Right cardiac atrium (tissue), 5 donors: ENCODE measurements at regions of chr4 and their contacts with region 1.

Region 1: GRCh38 chr4:124253080-124253479 is 459.5 kb downstream of the ANKRD50 start:
- DNase-seq: no peak
- ATAC-seq: no peak
- H3K4me3 ChIP-seq: no peak overlapping the region
- H3K27ac ChIP-seq: no peak overlapping the region
- H3K4me1 ChIP-seq: no peaks in the 10 kb centered on the region
- H3K27me3 ChIP-seq: no peaks in the 10 kb centered on the region

Region 2: DNA sequence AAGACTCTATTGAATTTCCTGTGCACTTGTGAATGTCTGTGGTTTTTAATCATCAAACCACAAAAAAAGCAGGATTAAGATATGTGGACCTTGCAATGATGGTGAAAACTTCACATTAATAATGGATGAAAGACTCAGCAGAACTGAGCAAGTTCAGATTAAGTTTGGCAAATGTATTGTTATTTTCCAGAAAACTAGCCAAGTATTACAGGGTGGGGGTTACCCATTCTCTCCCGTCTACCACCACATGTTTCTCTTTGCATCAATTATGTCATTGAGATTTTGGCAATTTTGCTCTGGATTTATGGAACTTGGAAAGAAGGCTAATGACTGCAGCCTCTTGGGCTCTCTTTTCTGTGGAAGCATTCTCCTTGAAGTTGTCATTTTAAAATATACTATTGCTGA is 117.7 kb before region 1 on chr4:
- intact Hi-C with region 1: loop called in 1 of 4 experiments (anchors 10 kb)
- DNase-seq: no peak
- ATAC-seq: no peak
- H3K4me3 ChIP-seq: no peak overlapping the region
- H3K27ac ChIP-seq: no peak overlapping the region
- H3K4me1 ChIP-seq: no peaks in the 10 kb centered on the region
- H3K27me3 ChIP-seq: no peaks in the 10 kb centered on the region